ENCODE measurements at regions of chr22 and their contacts with region 1.

Region 1: DNA sequence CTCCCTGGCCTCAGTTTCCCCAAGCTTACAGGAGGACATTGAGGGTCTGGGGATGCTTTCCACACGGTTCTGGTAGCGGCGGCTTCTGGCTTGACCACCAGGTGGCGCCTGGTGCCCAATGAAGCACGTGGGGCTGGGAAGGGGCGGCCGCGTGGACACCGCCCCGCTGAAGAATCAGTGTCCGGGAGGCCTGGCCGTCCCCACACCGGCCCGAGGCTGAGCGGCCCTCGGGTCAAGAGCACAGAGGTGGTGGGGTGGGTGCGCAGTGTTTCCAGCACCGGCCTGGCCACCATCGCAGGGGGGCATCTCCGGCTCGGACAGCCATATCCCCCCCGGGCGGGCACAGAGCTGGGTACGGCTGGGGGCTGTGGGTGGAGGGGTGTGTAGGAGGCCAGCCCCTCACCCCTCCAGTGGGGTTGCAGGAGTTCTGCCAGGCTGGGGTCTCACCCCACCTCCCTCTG is 27.8 kb upstream of the PPARA start:
- DNase-seq: peak; percentile 84 to 94
- ATAC-seq: peak; percentile 79
- H3K4me3 ChIP-seq: no peak overlapping the region
- H3K27ac ChIP-seq: no peak overlapping the region
- H3K4me1 ChIP-seq: no peaks in the 10 kb centered on the region
- H3K27me3 ChIP-seq: no peaks in the 10 kb centered on the region

Region 2: DNA sequence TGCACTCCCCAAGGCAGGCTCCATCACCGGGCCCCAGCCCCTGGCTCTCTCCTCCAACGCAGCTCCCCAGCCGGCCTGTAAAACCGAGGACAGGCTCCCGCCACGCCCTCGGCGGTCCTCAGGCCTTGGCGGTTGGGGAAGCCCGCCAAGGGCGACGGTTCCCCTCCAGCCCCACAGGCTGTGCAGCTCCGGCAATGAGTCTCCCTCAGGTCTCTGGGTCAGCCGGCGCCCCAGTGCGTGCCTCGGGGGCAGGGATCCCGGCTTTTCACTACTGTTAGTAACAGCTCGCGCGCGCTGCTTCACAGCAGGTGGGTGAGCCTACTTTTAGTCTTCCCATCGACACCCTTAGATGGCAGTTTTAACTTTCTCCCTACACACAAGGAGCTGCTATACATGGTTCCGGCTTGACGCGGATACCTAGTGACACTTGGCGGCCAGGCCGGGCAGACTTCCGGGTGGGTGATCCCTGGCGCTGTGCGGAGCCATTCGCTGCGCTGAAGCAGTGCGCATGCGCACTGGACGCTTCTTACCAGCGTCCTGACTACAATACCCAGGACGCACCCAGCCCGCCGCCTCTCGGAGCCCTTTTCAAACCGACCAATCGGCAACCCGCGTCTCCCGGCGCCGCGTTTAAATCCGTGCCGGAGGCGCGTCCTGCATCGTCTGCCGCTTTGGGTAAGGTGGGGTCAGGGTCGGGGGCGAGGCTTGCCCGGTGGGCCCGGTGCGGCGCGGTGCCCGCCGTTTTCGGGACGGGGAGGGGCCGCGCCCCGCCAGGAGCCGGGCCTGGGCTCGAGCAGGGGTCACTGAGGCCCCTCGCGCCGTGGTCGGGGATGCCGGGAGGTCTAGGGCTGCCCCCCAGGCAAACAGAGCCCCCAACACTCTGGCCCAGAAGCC is 174.0 kb after region 1 on chr22 and contains the start of gene GTSE1:
- intact Hi-C with region 1: loop called in 1 of 2 experiments (anchors 5 kb)
- DNase-seq: peak; percentile 99
- ATAC-seq: peak; percentile 98
- H3K4me3 ChIP-seq: peak within 1 kb of the TSS; percentile 9 to 37
- H3K27ac ChIP-seq: peak within 1 kb of the TSS; percentile 46 to 78
- H3K4me1 ChIP-seq: no peaks in the 10 kb centered on the region
- H3K27me3 ChIP-seq: no peaks in the 10 kb centered on the region
- total RNA-seq, gene GTSE1: 0.55 to 1.5 TPM

Region 3: GRCh38 chr22:46309526-46310085 is 187.1 kb after region 1 on chr22:
- intact Hi-C with region 1: loop called (anchors 2 to 5 kb)
- DNase-seq: peak in 1 of 2 donors; percentile 4
- ATAC-seq: no peak
- H3K4me3 ChIP-seq: no peak overlapping the region
- H3K27ac ChIP-seq: no peak overlapping the region
- H3K4me1 ChIP-seq: no peaks in the 10 kb centered on the region
- H3K27me3 ChIP-seq: no peaks in the 10 kb centered on the region

Region 4: DNA sequence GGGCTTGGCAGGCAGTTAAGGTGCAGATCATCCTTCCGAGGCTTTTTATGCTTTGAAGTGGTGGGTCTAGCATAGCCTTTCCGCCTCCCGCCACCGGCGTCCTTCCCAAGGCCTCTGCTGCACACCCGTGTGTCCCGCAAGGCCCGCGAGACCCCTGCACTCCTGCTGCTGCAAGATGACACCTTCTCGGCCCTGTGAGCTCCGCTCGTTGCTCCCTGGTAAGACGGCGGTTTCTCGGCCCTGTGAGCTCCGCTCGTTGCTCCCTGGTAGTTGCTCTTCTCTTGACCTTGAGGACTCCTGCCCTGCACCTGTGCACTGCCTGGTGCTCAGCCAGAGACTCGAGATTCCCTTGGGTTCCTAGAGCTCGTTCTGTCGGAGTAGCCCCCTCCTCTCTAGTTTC is 195.1 kb after region 1 on chr22:
- intact Hi-C with region 1: loop called (anchors 2 to 5 kb)
- DNase-seq: peak in 1 of 2 donors; percentile 63
- ATAC-seq: no peak
- H3K4me3 ChIP-seq: no peak overlapping the region
- H3K27ac ChIP-seq: no peak overlapping the region
- H3K4me1 ChIP-seq: no peaks in the 10 kb centered on the region
- H3K27me3 ChIP-seq: no peaks in the 10 kb centered on the region

Region 5: DNA sequence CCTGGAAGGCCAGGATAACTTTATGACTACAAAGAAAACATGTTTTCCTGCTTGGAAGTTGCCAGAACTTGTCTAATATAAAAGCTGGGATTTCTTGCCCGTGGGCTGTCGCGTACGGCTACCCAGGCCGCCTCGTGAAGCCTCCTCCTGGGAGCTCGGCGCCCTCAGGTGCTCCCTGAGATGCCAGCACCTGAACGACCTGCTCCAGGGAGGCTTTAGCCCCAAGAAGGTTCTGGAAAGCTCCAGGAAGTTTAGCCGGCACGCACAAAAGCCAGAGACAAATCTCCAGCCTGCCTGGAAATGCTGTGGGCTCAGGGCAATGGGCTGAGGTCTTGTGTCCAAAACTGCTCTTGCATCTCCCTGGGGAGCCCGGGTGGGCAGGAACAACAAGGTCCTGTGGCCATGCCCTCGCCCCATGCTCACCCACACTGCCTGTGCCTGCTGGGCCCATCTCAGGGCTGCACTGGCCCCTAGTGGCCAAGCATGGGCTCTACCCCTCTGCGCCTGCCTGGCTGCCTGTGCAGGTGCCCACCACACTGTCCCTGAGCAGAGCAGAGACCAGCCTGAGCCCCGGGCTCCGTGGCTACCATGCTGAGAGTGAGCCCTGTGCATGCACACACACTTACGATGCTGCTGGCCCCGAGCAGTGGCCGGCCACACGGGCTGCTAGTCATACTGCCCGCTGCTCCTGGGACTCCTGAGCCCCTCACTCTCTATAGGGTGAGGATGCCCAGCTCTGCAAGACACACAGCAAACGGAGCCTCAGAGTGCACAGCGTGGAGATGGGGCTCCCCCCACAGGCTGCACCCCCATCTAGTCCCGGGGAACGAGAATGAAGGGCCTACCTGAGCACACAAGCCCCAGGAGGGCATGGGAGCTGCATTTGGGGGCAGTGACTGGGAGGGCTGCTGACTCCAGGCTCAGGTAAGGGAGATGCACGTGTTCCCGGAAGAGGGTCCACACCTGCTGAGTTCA is 419.8 kb after region 1 on chr22:
- intact Hi-C with region 1: loop called (anchors 5 kb)
- DNase-seq: peak; percentile 83 to 88
- ATAC-seq: peak; percentile 90
- H3K4me3 ChIP-seq: no peak overlapping the region
- H3K27ac ChIP-seq: no peak overlapping the region
- H3K4me1 ChIP-seq: no peaks in the 10 kb centered on the region
- H3K27me3 ChIP-seq: no peaks in the 10 kb centered on the region